ENCODE measurements at regions of chr14 and their contacts with region 1.

Region 1: GRCh38 chr14:92712654-92713051 is 35.8 kb downstream of the LGMN start:
- DNase-seq: no peak
- H3K4me3 ChIP-seq: no peak overlapping the region
- H3K4me1 ChIP-seq: no peaks in the 10 kb centered on the region
- H3K27me3 ChIP-seq: no peaks in the 10 kb centered on the region

Region 2: GRCh38 chr14:92495035-92495434 is 217.6 kb before region 1 on chr14:
- in situ Hi-C with region 1: no loop called
- DNase-seq: no peak
- H3K4me3 ChIP-seq: no peak overlapping the region
- H3K4me1 ChIP-seq: no peaks in the 10 kb centered on the region
- H3K27me3 ChIP-seq: no peaks in the 10 kb centered on the region

Region 3: GRCh38 chr14:92783816-92784431 is 71.3 kb after region 1 on chr14:
- in situ Hi-C with region 1: loop called (anchors 5 kb)
- DNase-seq: peak; percentile 27 to 51
- H3K4me3 ChIP-seq: no peak overlapping the region
- H3K4me1 ChIP-seq: no peaks in the 10 kb centered on the region
- H3K27me3 ChIP-seq: no peaks in the 10 kb centered on the region

Measured in HAP-1 (cell line).